IMR-90 (cell line): ENCODE measurements at regions of chr5 and their contacts with region 1.

Region 1: DNA sequence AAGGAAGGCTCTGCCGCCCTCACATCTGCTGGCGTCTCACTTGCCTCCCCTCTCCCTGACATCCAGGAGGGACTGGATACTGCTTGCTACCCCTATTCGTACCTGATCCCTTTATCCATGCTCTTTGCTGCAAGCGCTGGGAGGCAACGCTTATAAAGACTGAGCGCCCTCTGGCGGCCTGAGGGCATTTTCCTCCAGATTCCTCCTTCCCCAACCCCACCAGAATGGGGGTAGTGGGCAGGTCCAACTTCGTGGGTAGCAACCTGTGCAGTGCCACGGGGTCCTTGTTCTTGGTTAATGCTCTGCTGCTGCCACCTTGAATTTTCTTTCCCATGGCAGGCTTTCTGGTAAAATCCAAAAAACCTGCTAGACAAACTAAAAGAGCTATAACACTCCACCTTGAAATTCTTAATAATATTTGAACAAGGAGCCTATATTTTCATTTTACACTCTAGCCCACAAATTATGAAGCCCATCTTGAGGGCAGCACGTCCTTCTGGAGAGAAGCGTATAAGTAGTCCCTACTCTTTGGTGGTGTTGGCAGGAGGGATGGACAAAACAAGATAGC is 52.4 kb downstream of the JADE2 start:
- DNase-seq: peak; percentile 75
- ATAC-seq: peak; percentile 67
- H3K4me3 ChIP-seq: no peak overlapping the region
- H3K27ac ChIP-seq: no peak overlapping the region
- H3K4me1 ChIP-seq: peaks cover 8% of the 10 kb centered on the region
- H3K27me3 ChIP-seq: no peaks in the 10 kb centered on the region
- CTCF ChIP-seq: peak; percentile 91
- POLR2A ChIP-seq: 0 out of 2 replicates have a peak, but pooled peaks have one; percentile 26
- RAD21 ChIP-seq: peak; percentile 92

Region 2: DNA sequence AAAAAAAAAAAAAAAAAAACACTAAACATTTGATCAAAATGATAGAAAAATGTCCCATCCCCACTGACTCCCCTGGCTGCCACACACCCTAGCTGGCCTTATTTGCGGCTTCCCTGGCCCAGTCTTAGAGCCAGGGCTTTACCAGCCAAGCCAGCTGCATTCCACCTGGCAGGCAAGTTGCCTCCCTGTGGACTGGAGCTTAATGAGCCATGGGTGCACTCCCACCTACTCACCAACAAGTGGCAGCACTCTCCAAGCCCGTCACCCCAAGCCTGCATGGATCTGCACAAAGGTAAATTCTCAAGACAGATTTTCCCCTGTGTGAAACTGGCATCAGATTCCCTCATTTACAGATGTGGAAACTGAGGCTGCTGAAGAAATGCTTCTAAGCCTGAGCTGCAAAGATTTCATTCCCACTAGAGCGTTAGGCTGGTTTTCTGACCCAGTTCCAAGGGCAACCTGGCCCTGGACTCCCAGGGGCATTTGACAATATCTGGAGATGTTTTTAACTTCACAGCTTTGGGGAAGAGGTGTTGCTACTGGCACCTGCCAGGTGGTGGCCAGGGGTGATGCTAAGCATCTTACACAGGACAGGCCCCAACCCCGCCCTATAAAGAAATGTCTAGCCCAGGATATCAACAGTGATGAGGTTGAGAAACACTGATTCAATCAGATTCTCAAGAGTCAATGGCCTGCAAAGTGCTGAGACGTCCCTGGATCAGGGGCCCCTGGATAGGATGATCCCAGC is 551.2 kb before region 1 on chr5:
- CTCF ChIA-PET with region 1: no interaction called
- POLR2A ChIA-PET with region 1: no interaction called
- dilution Hi-C with region 1: no loop called
- in situ Hi-C with region 1: no loop called
- intact Hi-C with region 1: no loop called
- DNase-seq: peak; percentile 63
- ATAC-seq: peak; percentile 52
- H3K4me3 ChIP-seq: no peak overlapping the region
- H3K27ac ChIP-seq: no peak overlapping the region
- H3K4me1 ChIP-seq: peaks cover 6% of the 10 kb centered on the region
- H3K27me3 ChIP-seq: peaks cover 34% of the 10 kb centered on the region
- CTCF ChIP-seq: peak; percentile 44
- POLR2A ChIP-seq: no peak
- RAD21 ChIP-seq: peak; percentile 37

Region 3: GRCh38 chr5:134304311-134304710 is 273.6 kb before region 1 on chr5:
- CTCF ChIA-PET with region 1: interaction called, 6 read pairs
- POLR2A ChIA-PET with region 1: no interaction called
- dilution Hi-C with region 1: no loop called
- in situ Hi-C with region 1: loop called (anchors 5 kb)
- intact Hi-C with region 1: no loop called
- DNase-seq: no peak
- ATAC-seq: no peak
- H3K4me3 ChIP-seq: no peak overlapping the region
- H3K27ac ChIP-seq: no peak overlapping the region
- H3K4me1 ChIP-seq: no peaks in the 10 kb centered on the region
- H3K27me3 ChIP-seq: no peaks in the 10 kb centered on the region
- CTCF ChIP-seq: no peak
- POLR2A ChIP-seq: no peak
- RAD21 ChIP-seq: no peak

Region 4: DNA sequence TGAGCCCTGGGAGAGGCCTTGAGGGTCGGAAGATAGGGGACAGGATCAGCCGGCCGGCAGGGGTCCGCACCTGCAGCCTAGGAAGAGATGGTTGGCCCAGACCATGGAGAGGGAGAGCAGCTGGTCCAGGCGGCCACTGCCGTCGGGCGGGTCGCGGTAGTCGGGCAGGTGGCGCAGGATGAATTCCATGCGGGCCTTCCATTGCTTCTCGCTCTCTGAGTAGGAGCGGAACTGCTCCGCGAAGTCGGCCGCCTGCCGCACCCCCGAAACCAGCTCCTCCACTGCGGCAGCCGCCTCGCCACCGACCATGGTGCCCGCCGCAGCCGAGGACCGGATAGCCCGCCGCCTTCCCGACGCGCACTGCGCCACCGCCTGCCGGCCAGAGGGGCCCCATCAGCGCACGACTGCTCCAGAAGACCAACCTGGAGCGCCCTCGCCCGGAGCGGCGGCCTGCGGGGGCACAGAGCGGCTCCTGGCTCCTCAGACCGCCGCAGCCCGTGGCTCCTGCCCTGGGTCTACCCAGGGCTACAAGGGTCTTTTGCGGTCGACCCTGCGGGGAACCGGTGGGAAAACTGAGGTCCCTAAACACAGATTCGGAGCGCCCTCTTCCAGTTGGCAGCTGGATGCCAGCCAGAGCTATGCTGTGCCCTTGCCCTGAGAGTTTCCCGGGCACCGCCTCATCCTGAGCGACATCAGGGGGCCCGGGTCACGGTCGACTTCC is 166.2 kb before region 1 on chr5 and contains the start of gene CDKN2AIPNL:
- CTCF ChIA-PET with region 1: interaction called, 3 read pairs
- POLR2A ChIA-PET with region 1: no interaction called
- dilution Hi-C with region 1: no loop called
- in situ Hi-C with region 1: no loop called
- intact Hi-C with region 1: loop called (anchors 1 kb)
- DNase-seq: peak; percentile 80
- ATAC-seq: peak; percentile 100
- H3K4me3 ChIP-seq: peak within 1 kb of the TSS; percentile 71
- H3K27ac ChIP-seq: peak within 1 kb of the TSS; percentile 87
- H3K4me1 ChIP-seq: peaks cover 8% of the 10 kb centered on the region
- H3K27me3 ChIP-seq: no peaks in the 10 kb centered on the region
- CTCF ChIP-seq: peak; percentile 90
- POLR2A ChIP-seq: peak; percentile 74
- RAD21 ChIP-seq: peak; percentile 63
- total RNA-seq, gene CDKN2AIPNL: 18.1 and 27.5 TPM in 2 replicates

Region 5: DNA sequence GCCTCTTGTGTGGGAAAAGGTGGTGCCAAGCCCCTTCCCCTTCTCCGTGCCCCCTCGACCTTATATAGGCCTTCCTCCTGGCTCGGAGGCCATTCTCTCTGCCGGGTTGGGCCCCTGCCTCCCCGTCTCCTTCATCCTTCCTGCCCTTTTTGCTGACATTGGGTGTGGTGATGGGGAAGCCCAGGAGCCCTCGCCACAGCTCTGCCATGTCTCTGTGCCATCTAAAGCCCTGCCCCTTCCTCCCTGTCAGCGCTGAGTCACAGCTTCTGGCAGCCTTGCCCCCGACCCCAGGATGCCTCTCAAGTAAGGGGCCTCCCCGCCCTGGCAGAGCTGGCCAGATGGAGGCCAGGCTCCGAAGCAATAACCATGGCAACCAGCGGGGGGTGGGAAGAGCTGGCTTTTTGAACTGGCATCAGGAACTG is 22.0 kb before region 1 on chr5:
- CTCF ChIA-PET with region 1: no interaction called
- POLR2A ChIA-PET with region 1: no interaction called
- dilution Hi-C with region 1: no loop called
- in situ Hi-C with region 1: no loop called
- intact Hi-C with region 1: no loop called
- DNase-seq: peak; percentile 68
- ATAC-seq: peak; percentile 8; the same call in 1 of the 2 replicates
- H3K4me3 ChIP-seq: no peak overlapping the region
- H3K27ac ChIP-seq: peak overlapping the region; percentile 54
- H3K4me1 ChIP-seq: peaks cover 44% of the 10 kb centered on the region
- H3K27me3 ChIP-seq: no peaks in the 10 kb centered on the region
- CTCF ChIP-seq: 0 out of 2 replicates have a peak, but pooled peaks have one; percentile 7
- POLR2A ChIP-seq: no peak
- RAD21 ChIP-seq: no peak